Activated CD4-positive, alpha-beta T cell treated with anti-CD3 and anti-CD28 coated beads for 36 hours (primary cell): ENCODE measurements at regions of chr9 and their contacts with region 1.

Region 1: DNA sequence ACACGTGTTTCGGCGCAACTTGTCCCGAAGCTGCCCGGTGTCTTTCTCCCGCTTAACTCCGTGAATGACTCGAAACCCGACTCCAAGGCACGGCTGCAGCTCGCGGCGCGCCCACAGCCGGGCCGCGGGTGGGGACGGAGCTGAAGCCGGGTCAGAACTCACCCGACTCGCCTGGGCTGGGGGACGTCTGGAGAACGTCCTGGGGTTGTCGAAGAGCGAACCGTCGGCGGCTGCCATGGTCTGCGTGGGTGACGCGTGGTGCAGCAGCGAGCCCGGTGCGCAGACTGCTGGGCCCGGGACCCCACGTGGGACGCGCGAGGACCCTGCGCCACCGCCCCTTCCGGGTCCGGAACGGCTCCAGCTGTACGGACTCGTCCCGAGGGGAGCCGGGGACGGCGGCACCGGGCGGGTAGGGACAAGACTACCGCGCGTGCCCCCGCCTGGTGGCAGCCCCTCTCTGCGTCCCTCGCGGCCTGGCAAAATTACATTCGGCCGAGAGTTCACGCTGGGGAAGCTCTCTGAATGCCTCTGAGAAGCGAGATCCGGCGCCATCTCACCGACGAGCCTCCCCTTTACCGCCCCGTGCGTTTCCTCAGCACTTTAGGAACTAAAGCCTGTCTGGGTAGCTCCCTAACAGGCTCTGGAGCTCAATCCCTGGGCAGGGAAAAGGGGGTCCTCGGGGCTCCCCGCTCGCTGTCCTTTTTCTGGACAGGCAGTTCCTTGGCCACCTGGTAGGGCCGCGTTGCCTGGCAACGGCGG is at the start of gene DDX31:
- DNase-seq: peak; percentile 91
- ATAC-seq: peak; percentile 86
- H3K4me3 Mint-ChIP-seq: peak within 1 kb of the TSS; percentile 89
- H3K27ac Mint-ChIP-seq: peak within 1 kb of the TSS; percentile 90
- H3K4me1 Mint-ChIP-seq: peaks cover 49% of the 10 kb centered on the region
- H3K27me3 Mint-ChIP-seq: no peaks in the 10 kb centered on the region
- total RNA-seq, gene DDX31: 20.9 to 21.0 TPM

Region 2: GRCh38 chr9:132679946-132680625 is 10.2 kb after region 1 on chr9:
- CTCF ChIA-PET with region 1: interaction called, 4 read pairs
- POLR2A ChIA-PET with region 1: interaction called, 4 read pairs
- intact Hi-C with region 1: loop called in 1 of 2 experiments (anchors 1 kb)
- DNase-seq: no peak
- ATAC-seq: peak; percentile 96
- H3K4me3 Mint-ChIP-seq: no peak overlapping the region
- H3K27ac Mint-ChIP-seq: peak overlapping the region; percentile 75
- H3K4me1 Mint-ChIP-seq: peaks cover 44% of the 10 kb centered on the region
- H3K27me3 Mint-ChIP-seq: no peaks in the 10 kb centered on the region

Region 3: DNA sequence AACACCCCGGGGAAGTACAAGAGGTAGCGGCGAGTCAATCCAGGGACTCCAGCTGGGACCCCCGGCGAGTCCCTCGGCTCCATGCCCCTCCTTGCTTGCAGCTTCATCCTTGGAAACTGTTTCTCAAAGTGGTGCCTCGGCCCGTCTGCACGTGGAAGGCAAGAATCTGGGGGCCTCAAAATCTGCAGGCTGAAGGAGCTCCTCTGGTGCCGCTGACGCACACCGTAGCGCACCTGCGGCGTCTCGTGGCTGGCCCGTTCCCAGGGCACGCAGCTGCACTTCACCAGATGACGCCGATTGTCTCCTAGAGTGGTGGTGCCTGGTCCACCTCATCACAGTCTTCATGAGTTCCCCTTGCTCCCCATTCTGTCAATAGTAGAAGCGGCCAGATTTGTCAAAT is 38.9 kb after region 1 on chr9:
- CTCF ChIA-PET with region 1: no interaction called
- POLR2A ChIA-PET with region 1: no interaction called
- intact Hi-C with region 1: no loop called
- DNase-seq: no peak
- ATAC-seq: no peak
- H3K4me3 Mint-ChIP-seq: no peak overlapping the region
- H3K27ac Mint-ChIP-seq: no peak overlapping the region
- H3K4me1 Mint-ChIP-seq: no peaks in the 10 kb centered on the region
- H3K27me3 Mint-ChIP-seq: peaks cover 9% of the 10 kb centered on the region

Region 4: GRCh38 chr9:132800038-132800648 is 130.3 kb after region 1 on chr9:
- CTCF ChIA-PET with region 1: no interaction called
- POLR2A ChIA-PET with region 1: no interaction called
- intact Hi-C with region 1: loop called in 1 of 2 experiments (anchors 10 kb)
- DNase-seq: peak; percentile 77
- ATAC-seq: peak; percentile 87
- H3K4me3 Mint-ChIP-seq: no peak overlapping the region
- H3K27ac Mint-ChIP-seq: no peak overlapping the region
- H3K4me1 Mint-ChIP-seq: no peaks in the 10 kb centered on the region
- H3K27me3 Mint-ChIP-seq: peaks cover 9% of the 10 kb centered on the region

Region 5: GRCh38 chr9:132901856-132902831 is 232.3 kb after region 1 on chr9:
- CTCF ChIA-PET with region 1: interaction called, 3 read pairs
- POLR2A ChIA-PET with region 1: no interaction called
- intact Hi-C with region 1: loop called in 1 of 2 experiments (anchors 1 kb)
- DNase-seq: peak; percentile 87
- ATAC-seq: peak; percentile 99
- H3K4me3 Mint-ChIP-seq: no peak overlapping the region
- H3K27ac Mint-ChIP-seq: no peak overlapping the region
- H3K4me1 Mint-ChIP-seq: peaks cover 8% of the 10 kb centered on the region
- H3K27me3 Mint-ChIP-seq: no peaks in the 10 kb centered on the region

Region 6: GRCh38 chr9:133133681-133134418 is 464.0 kb after region 1 on chr9:
- CTCF ChIA-PET with region 1: no interaction called
- POLR2A ChIA-PET with region 1: no interaction called
- intact Hi-C with region 1: loop called in 1 of 2 experiments (anchors 5 kb)
- DNase-seq: peak; percentile 95
- ATAC-seq: peak; percentile 84
- H3K4me3 Mint-ChIP-seq: peak overlapping the region; percentile 41
- H3K27ac Mint-ChIP-seq: peak overlapping the region; percentile 98
- H3K4me1 Mint-ChIP-seq: peaks cover 75% of the 10 kb centered on the region
- H3K27me3 Mint-ChIP-seq: no peaks in the 10 kb centered on the region